ENCODE measurements at regions of chr11 and their contacts with region 1.

Region 1: GRCh38 chr11:13868710-13869397 is 93.7 kb upstream of the SPON1 start:
- DNase-seq: peak; percentile 61
- H3K4me3 Mint-ChIP-seq: peak overlapping the region; percentile 42
- H3K27ac Mint-ChIP-seq: peak overlapping the region; percentile 91
- H3K4me1 Mint-ChIP-seq: peaks cover 41% of the 10 kb centered on the region
- H3K27me3 Mint-ChIP-seq: no peaks in the 10 kb centered on the region

Region 2: GRCh38 chr11:13462901-13463778 is 405.7 kb before region 1 on chr11 and contains the start of gene BTBD10:
- CTCF ChIA-PET with region 1: no interaction called
- intact Hi-C with region 1: loop called (anchors 1 kb)
- DNase-seq: peak; percentile 94
- H3K4me3 Mint-ChIP-seq: peak within 1 kb of the TSS; percentile 99
- H3K27ac Mint-ChIP-seq: peak within 1 kb of the TSS; percentile 96
- H3K4me1 Mint-ChIP-seq: peaks cover 33% of the 10 kb centered on the region
- H3K27me3 Mint-ChIP-seq: no peaks in the 10 kb centered on the region
- total RNA-seq, gene BTBD10: 20.9 to 21.0 TPM

Region 3: DNA sequence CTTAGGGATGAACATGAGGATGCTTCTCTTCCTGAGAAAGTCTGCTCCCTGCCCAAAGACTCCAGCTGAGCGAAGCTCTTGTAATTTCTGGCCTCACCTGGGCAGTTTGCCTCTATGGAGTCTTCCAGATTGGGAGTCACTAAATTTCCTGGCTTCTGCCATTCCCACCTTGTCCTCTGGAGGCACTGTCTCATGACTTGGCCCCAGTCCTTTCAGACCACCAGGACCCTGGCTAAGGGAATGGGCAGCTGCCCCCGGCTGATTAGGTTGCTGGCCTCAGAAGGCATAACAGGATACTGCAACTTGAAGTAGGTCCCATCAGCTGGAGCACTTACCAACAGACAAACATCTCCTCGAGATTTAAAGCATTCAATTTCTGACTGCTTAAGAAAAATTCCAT is 34.4 kb before region 1 on chr11:
- CTCF ChIA-PET with region 1: interaction called, 3 read pairs
- intact Hi-C with region 1: loop called (anchors 1 kb)
- DNase-seq: peak; percentile 6
- H3K4me3 Mint-ChIP-seq: no peak overlapping the region
- H3K27ac Mint-ChIP-seq: no peak overlapping the region
- H3K4me1 Mint-ChIP-seq: peaks cover 15% of the 10 kb centered on the region
- H3K27me3 Mint-ChIP-seq: no peaks in the 10 kb centered on the region

Region 4: GRCh38 chr11:13850231-13851005 is 18.4 kb before region 1 on chr11:
- CTCF ChIA-PET with region 1: no interaction called
- intact Hi-C with region 1: no loop called
- DNase-seq: no peak
- H3K4me3 Mint-ChIP-seq: no peak overlapping the region
- H3K27ac Mint-ChIP-seq: no peak overlapping the region
- H3K4me1 Mint-ChIP-seq: peaks cover 12% of the 10 kb centered on the region
- H3K27me3 Mint-ChIP-seq: no peaks in the 10 kb centered on the region

Region 5: GRCh38 chr11:13939952-13940610 is 71.2 kb after region 1 on chr11:
- CTCF ChIA-PET with region 1: no interaction called
- intact Hi-C with region 1: loop called (anchors 2 kb)
- DNase-seq: no peak
- H3K4me3 Mint-ChIP-seq: no peak overlapping the region
- H3K27ac Mint-ChIP-seq: no peak overlapping the region
- H3K4me1 Mint-ChIP-seq: peaks cover 47% of the 10 kb centered on the region
- H3K27me3 Mint-ChIP-seq: no peaks in the 10 kb centered on the region

Region 6: GRCh38 chr11:14107050-14107430 is 238.2 kb after region 1 on chr11:
- CTCF ChIA-PET with region 1: no interaction called
- intact Hi-C with region 1: loop called (anchors 10 kb)
- DNase-seq: no peak
- H3K4me3 Mint-ChIP-seq: no peak overlapping the region
- H3K27ac Mint-ChIP-seq: no peak overlapping the region
- H3K4me1 Mint-ChIP-seq: peaks cover 18% of the 10 kb centered on the region
- H3K27me3 Mint-ChIP-seq: no peaks in the 10 kb centered on the region

Region 7: GRCh38 chr11:14764579-14765527 is 896.0 kb after region 1 on chr11:
- CTCF ChIA-PET with region 1: no interaction called
- intact Hi-C with region 1: loop called (anchors 5 kb)
- DNase-seq: peak; percentile 58
- H3K4me3 Mint-ChIP-seq: peak overlapping the region; percentile 41
- H3K27ac Mint-ChIP-seq: no peak overlapping the region
- H3K4me1 Mint-ChIP-seq: peaks cover 45% of the 10 kb centered on the region
- H3K27me3 Mint-ChIP-seq: no peaks in the 10 kb centered on the region

Measured in activated naive CD4-positive, alpha-beta T cell treated with anti-CD3 and anti-CD28 coated beads for 36 hours (primary cell).